ENCODE measurements at regions of chr7 and their contacts with region 1.

Region 1: GRCh38 chr7:23712368-23713284 is 2.6 kb downstream of the STK31 start:
- DNase-seq: no peak
- ATAC-seq: peak; percentile 49
- H3K4me3 Mint-ChIP-seq: no peak overlapping the region
- H3K27ac Mint-ChIP-seq: no peak overlapping the region
- H3K4me1 Mint-ChIP-seq: no peaks in the 10 kb centered on the region
- H3K27me3 Mint-ChIP-seq: no peaks in the 10 kb centered on the region

Region 2: GRCh38 chr7:23261843-23262452 is 450.7 kb before region 1 on chr7:
- CTCF ChIA-PET with region 1: no interaction called
- POLR2A ChIA-PET with region 1: no interaction called
- intact Hi-C with region 1: loop called in 1 of 2 experiments (anchors 2 kb)
- DNase-seq: peak; percentile 81
- ATAC-seq: peak; percentile 95
- H3K4me3 Mint-ChIP-seq: no peak overlapping the region
- H3K27ac Mint-ChIP-seq: no peak overlapping the region
- H3K4me1 Mint-ChIP-seq: peaks cover 4% of the 10 kb centered on the region
- H3K27me3 Mint-ChIP-seq: peaks cover 9% of the 10 kb centered on the region

Region 3: DNA sequence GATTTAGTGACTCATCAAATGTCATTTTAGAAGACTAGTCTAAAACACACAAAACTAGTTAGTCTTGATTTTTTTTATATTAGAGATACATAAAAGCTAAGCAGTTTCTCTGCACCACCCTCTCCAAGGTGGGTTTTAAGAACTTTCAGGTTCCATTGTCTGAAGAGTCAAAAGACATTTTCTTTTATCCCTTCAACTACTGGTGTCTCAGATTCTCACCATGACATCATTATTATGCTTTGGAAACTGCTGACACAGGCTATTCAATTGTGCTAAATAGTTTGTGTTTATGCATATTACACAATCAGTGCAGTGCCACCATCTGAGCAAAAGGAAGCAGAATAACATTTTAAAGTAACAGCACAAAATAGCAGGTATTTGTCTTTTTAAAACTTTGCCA is 294.6 kb before region 1 on chr7:
- CTCF ChIA-PET with region 1: no interaction called
- POLR2A ChIA-PET with region 1: no interaction called
- intact Hi-C with region 1: no loop called
- DNase-seq: no peak
- ATAC-seq: peak; percentile 33
- H3K4me3 Mint-ChIP-seq: no peak overlapping the region
- H3K27ac Mint-ChIP-seq: no peak overlapping the region
- H3K4me1 Mint-ChIP-seq: peaks cover 14% of the 10 kb centered on the region
- H3K27me3 Mint-ChIP-seq: peaks cover 3% of the 10 kb centered on the region

Region 4: GRCh38 chr7:23431702-23432199 is 280.9 kb before region 1 on chr7:
- CTCF ChIA-PET with region 1: interaction called, 3 read pairs
- POLR2A ChIA-PET with region 1: no interaction called
- intact Hi-C with region 1: loop called in 1 of 2 experiments (anchors 5 kb)
- DNase-seq: no peak
- ATAC-seq: no peak
- H3K4me3 Mint-ChIP-seq: no peak overlapping the region
- H3K27ac Mint-ChIP-seq: no peak overlapping the region
- H3K4me1 Mint-ChIP-seq: peaks cover 2% of the 10 kb centered on the region
- H3K27me3 Mint-ChIP-seq: peaks cover 25% of the 10 kb centered on the region

Region 5: GRCh38 chr7:23445326-23445725 is 267.3 kb before region 1 on chr7:
- CTCF ChIA-PET with region 1: no interaction called
- POLR2A ChIA-PET with region 1: no interaction called
- intact Hi-C with region 1: no loop called
- DNase-seq: no peak
- ATAC-seq: peak; percentile 63
- H3K4me3 Mint-ChIP-seq: no peak overlapping the region
- H3K27ac Mint-ChIP-seq: no peak overlapping the region
- H3K4me1 Mint-ChIP-seq: no peaks in the 10 kb centered on the region
- H3K27me3 Mint-ChIP-seq: peaks cover 4% of the 10 kb centered on the region

Region 6: DNA sequence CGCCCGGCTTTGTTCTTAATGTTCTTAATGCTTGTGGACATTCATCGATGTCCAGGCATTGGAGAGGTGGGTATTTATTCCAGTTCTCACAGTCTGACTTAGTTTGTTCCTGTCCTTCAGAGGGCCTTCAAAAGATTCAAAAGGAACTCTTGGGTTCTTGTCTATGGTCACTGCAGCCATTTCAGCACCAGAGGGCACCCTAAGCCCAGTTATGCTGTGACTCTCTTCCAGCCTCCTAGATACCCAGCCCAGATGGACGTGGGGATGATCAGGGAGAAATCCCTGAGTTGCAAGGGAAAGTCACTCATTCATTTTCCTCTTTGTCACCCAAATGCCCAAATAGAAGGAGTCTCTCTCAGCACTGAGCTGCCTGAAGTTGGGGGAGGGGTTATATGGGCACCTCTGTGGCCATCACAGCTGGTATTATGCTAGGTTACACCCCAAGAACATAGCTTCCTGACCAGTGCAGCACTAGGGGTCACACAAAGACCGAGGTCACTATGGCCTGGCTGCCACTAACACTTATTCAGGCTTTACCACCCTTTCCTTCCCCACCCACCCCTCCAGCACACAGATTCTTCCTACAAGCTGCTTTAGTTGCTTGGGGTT is 141.9 kb before region 1 on chr7:
- CTCF ChIA-PET with region 1: interaction called, 102 read pairs
- POLR2A ChIA-PET with region 1: no interaction called
- intact Hi-C with region 1: loop called (anchors 1 kb)
- DNase-seq: peak; percentile 83
- ATAC-seq: peak; percentile 92
- H3K4me3 Mint-ChIP-seq: no peak overlapping the region
- H3K27ac Mint-ChIP-seq: no peak overlapping the region
- H3K4me1 Mint-ChIP-seq: no peaks in the 10 kb centered on the region
- H3K27me3 Mint-ChIP-seq: peaks cover 4% of the 10 kb centered on the region

Region 7: DNA sequence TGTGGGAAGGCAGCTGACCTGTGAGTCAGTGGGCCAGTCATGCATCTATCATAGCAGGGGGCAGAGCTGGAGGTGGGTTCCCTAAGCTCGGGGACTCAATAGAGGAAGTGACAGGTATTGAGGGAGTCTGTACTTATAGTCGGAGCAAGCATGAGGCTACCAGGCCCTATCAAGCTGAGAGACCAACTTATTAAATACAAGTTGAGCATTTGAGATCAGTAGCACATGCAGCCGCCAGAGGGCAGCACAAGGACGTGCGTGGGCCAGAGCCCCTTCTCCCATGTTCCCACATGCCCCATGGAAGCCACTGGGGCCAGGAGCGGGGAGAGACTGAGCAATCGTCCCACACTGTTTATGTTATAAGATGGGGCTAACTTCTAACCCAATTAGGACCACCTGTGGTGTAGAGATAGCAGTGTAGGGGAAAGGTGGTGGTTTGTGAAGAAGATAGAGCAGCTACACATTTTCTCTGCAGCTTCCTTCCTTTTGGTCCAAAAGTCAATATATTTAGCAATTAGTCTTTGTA is 15.6 kb before region 1 on chr7:
- CTCF ChIA-PET with region 1: interaction called, 10 read pairs
- POLR2A ChIA-PET with region 1: no interaction called
- intact Hi-C with region 1: no loop called
- DNase-seq: peak; percentile 74
- ATAC-seq: no peak
- H3K4me3 Mint-ChIP-seq: no peak overlapping the region
- H3K27ac Mint-ChIP-seq: no peak overlapping the region
- H3K4me1 Mint-ChIP-seq: peaks cover 2% of the 10 kb centered on the region
- H3K27me3 Mint-ChIP-seq: no peaks in the 10 kb centered on the region